Activated CD4-positive, alpha-beta memory T cell treated with anti-CD3 and anti-CD28 coated beads, Interleukin-2, amount 10 ng/mL, durations not matched to agents 7 days and 5 days (primary cell): ENCODE measurements at regions of chr2 and their contacts with region 1.

Region 1: DNA sequence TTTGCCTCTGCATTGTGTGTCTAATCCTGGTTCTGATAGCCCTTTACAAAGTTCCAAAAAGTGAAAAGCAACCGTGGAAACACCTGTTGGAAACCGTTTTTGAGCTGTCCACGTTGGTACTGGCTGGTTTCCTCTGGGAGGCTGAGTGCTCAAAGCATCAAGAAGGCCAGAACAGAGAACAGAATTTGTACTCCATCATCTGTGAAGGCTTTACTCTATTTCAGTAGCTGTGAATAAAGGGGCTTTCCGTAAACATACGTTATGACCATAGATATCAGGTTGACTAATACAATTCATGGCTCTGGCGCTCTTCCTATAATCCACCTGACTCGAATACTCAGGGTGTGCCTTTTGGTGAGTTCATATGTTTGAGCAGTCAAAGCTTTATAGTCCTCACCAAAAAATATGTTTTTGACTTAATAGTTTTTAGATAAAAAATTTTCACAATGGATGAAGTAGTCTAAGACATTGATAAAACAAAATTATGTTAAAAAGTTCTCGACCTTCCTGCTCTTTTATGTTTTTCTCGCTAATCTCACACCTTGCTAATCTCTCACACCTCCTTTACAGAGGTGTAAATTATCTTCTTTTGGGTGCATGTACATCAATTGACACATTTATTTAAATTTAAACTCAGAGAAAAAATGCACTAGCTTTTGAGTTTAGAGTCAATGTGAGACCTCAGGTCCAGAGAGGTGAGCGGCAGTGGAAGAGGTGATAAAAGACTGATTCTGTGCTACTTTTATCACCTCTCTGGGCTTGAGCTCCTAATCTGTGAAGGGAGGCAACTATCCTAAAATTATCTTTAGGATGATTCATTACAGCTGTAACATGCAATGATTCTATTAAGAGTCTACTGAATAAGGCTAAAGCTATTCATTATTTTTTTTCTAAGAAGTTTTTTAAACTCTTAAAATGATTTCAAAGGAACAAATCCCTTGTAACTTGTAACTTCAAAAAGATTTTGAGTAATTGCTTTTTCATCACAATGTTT is 65.3 kb downstream of the CXCR4 start:
- DNase-seq: peak; percentile 31
- H3K4me3 Mint-ChIP-seq: peak overlapping the region; percentile 53
- H3K27ac Mint-ChIP-seq: peak overlapping the region; percentile 87
- H3K4me1 Mint-ChIP-seq: peaks cover 92% of the 10 kb centered on the region
- H3K27me3 Mint-ChIP-seq: no peaks in the 10 kb centered on the region

Region 2: GRCh38 chr2:135876066-135876711 is 176.5 kb before region 1 on chr2 and contains the start of gene MCM6:
- CTCF ChIA-PET with region 1: no interaction called
- POLR2A ChIA-PET with region 1: interaction called, 10 read pairs
- DNase-seq: peak; percentile 99
- H3K4me3 Mint-ChIP-seq: peak within 1 kb of the TSS; percentile 83
- H3K27ac Mint-ChIP-seq: peak within 1 kb of the TSS; percentile 93
- H3K4me1 Mint-ChIP-seq: peaks cover 42% of the 10 kb centered on the region
- H3K27me3 Mint-ChIP-seq: no peaks in the 10 kb centered on the region
- total RNA-seq, gene MCM6: 128 to 130 TPM

Region 3: GRCh38 chr2:136008205-136008865 is 44.3 kb before region 1 on chr2:
- CTCF ChIA-PET with region 1: interaction called, 5 read pairs
- POLR2A ChIA-PET with region 1: interaction called, 138 read pairs
- DNase-seq: peak; percentile 90
- H3K4me3 Mint-ChIP-seq: peak overlapping the region; percentile 50
- H3K27ac Mint-ChIP-seq: peak overlapping the region; percentile 94
- H3K4me1 Mint-ChIP-seq: peaks cover 68% of the 10 kb centered on the region
- H3K27me3 Mint-ChIP-seq: no peaks in the 10 kb centered on the region

Region 4: DNA sequence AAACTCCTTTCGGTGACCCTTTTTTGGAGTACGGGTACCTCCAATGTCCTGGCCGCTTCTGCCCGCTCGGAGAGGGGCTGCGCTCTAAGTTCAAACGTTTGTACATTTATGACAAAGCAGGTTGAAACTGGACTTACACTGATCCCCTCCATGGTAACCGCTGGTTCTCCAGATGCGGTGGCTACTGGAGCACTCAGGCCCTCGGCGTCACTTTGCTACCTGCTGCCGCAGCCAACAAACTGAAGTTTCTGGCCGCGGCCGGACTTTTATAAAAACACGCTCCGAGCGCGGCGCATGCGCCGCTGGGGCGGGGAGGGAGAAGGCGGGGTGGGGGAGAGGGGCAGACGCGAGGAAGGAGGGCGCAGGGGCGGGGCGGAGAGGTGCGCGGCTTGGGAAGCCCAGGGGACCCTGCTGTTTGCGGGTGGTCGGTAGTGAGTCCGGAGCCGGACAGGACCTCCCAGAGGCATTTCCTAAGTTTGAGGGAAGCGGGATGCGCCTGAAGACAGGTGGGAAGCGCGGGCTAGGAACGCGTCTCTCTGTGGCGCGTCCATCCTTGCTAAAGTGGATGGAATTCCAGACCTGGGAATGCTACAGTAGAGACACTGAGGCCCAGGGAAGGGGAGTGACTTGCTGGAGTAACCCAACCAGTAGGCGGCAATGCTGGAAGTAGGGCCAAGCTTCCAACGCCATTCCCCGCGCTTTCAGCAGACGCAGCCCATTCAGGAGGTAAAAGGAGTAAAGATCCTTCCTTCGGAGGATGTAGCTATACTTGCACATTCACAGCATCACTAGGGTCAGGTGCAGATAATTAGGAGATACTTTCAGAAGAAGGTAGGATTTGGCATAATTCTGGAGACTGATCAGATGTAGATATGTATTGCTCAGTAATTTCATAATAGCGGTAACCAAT is 65.5 kb after region 1 on chr2 and contains the start of gene CXCR4:
- CTCF ChIA-PET with region 1: interaction called, 5 read pairs
- POLR2A ChIA-PET with region 1: interaction called, 71 read pairs
- DNase-seq: peak; percentile 90
- H3K4me3 Mint-ChIP-seq: peak within 1 kb of the TSS; percentile 98
- H3K27ac Mint-ChIP-seq: peak within 1 kb of the TSS; percentile 97
- H3K4me1 Mint-ChIP-seq: peaks cover 43% of the 10 kb centered on the region
- H3K27me3 Mint-ChIP-seq: peaks cover 31% of the 10 kb centered on the region
- total RNA-seq, gene CXCR4: 202 to 212 TPM

Region 5: GRCh38 chr2:136207030-136207623 is 154.5 kb after region 1 on chr2:
- CTCF ChIA-PET with region 1: no interaction called
- POLR2A ChIA-PET with region 1: no interaction called
- DNase-seq: no peak
- H3K4me3 Mint-ChIP-seq: no peak overlapping the region
- H3K27ac Mint-ChIP-seq: no peak overlapping the region
- H3K4me1 Mint-ChIP-seq: peaks cover 10% of the 10 kb centered on the region
- H3K27me3 Mint-ChIP-seq: no peaks in the 10 kb centered on the region

Region 6: GRCh38 chr2:136378712-136379595 is 326.3 kb after region 1 on chr2:
- CTCF ChIA-PET with region 1: interaction called, 10 read pairs
- POLR2A ChIA-PET with region 1: interaction called, 16 read pairs
- DNase-seq: peak; percentile 82
- H3K4me3 Mint-ChIP-seq: no peak overlapping the region
- H3K27ac Mint-ChIP-seq: peak overlapping the region; percentile 37
- H3K4me1 Mint-ChIP-seq: peaks cover 87% of the 10 kb centered on the region
- H3K27me3 Mint-ChIP-seq: no peaks in the 10 kb centered on the region